ENCODE measurements at regions of chr20 and their contacts with region 1.

Region 1: DNA sequence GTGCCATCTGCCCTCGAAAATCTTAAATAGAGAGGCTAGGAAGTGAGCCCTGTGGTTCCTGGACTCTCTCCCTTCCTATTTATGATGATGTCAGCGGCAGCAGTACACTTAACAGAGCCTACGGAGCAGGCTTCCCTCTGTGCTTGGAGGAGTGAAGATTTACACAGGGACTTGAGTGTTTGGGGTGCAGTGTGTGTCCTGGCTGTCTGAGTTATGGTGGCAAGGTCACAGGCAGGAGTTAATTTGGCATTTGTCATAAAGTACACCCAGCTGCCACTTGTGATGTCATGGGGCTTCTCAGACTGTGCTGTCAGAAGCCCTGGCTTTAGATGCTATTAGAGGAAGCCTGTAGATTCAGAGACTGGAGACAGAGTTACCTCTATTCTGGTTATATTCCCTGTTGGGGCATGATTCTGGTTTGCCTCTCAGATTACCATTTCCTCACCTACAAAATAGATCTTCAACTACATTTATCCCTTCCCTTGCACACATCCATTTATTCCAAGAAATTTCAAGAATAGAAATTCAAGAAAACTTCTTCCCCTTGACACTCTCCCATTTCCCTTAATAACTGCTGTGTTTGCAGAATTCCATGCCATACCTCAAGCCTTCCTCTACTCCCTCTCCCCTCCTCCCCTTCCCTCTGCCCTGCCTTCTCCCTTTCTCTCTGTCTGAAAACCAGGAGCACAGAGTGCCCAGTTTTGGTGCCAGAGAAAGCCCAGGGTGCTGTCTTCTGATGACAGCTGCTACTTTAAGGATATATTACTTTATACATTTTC is 72.1 kb downstream of the SLC24A3 start:
- DNase-seq: peak; percentile 75
- H3K4me3 ChIP-seq: no peak overlapping the region
- H3K27ac ChIP-seq: peak overlapping the region in 3 of 4 donors; percentile 69 to 74 (median 70)
- H3K4me1 ChIP-seq: peaks cover 0 to 51% (median 48%) of the 10 kb centered on the region in 4 donors
- H3K27me3 ChIP-seq: no peaks in the 10 kb centered on the region
- CTCF ChIP-seq: no peak
- EP300 ChIP-seq: peak in 1 of 4 donors; percentile 25
- POLR2A ChIP-seq: no peak

Region 2: GRCh38 chr20:19212821-19213502 is 71.6 kb before region 1 on chr20:
- intact Hi-C with region 1: loop called (anchors 2 kb)
- DNase-seq: peak; percentile 93
- H3K4me3 ChIP-seq: peak overlapping the region; percentile 47 to 74 (median 60)
- H3K27ac ChIP-seq: peak overlapping the region; percentile 49 to 84 (median 80)
- H3K4me1 ChIP-seq: peaks cover 0 to 41% (median 31%) of the 10 kb centered on the region in 4 donors
- H3K27me3 ChIP-seq: peaks cover 0 to 6% (median 0%) of the 10 kb centered on the region in 3 donors
- CTCF ChIP-seq: peak; percentile 42 to 69 (median 52)
- EP300 ChIP-seq: no peak
- POLR2A ChIP-seq: no peak

Region 3: GRCh38 chr20:19232997-19233794 is 51.4 kb before region 1 on chr20:
- intact Hi-C with region 1: loop called (anchors 5 kb)
- DNase-seq: peak; percentile 79
- H3K4me3 ChIP-seq: peak overlapping the region in 3 of 4 donors; percentile 7 to 27 (median 14)
- H3K27ac ChIP-seq: peak overlapping the region in 3 of 4 donors; percentile 54 to 82 (median 79)
- H3K4me1 ChIP-seq: peaks cover 0 to 46% (median 39%) of the 10 kb centered on the region in 4 donors
- H3K27me3 ChIP-seq: no peaks in the 10 kb centered on the region
- CTCF ChIP-seq: no peak
- EP300 ChIP-seq: peak in 3 of 4 donors; percentile 58 to 84 (median 79)
- POLR2A ChIP-seq: no peak

Region 4: GRCh38 chr20:19341348-19342053 is 56.9 kb after region 1 on chr20:
- intact Hi-C with region 1: loop called (anchors 5 kb)
- DNase-seq: no peak
- H3K4me3 ChIP-seq: no peak overlapping the region
- H3K27ac ChIP-seq: peak overlapping the region in 3 of 4 donors; percentile 39 to 52 (median 49)
- H3K4me1 ChIP-seq: peaks cover 0 to 48% (median 40%) of the 10 kb centered on the region in 4 donors
- H3K27me3 ChIP-seq: no peaks in the 10 kb centered on the region
- CTCF ChIP-seq: no peak
- EP300 ChIP-seq: peak in 3 of 4 donors; percentile 13 to 62 (median 40)
- POLR2A ChIP-seq: no peak

Region 5: DNA sequence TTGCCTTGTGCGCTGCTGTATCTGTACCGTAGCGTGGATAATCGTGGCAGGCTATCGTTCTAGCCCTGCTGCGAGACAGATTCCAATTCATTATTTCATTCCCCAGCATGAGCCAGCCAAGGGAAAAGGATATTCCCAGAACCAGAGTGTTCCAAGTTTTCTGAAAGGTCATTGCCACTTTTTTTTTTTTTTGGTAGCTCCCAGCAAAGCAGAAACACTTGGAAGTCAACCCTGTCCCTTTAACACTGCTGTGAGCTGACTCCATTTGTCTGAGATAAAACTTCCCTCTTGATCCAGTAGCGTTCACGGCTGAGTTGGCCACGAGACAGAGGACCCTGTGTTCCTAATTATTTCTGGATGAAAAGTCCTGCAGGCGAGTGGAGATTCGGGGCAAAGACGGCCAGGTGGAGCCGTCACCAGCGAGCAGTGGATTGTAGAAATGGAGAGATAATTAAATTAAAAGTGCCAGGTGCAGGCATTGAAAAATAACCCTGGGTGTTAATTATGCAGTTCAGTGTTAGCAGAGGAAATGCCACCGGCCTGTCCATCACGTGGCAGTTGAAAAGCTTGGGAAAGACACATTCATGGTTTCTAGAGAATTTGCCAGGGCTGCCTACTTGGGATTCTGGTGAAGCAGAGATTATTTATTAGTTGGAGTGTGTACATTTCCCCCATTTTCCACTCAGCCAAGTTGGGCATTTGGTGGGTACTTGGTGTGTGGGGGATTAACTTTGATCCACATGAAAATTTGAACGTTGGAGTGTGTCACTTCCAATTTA is 92.1 kb after region 1 on chr20:
- intact Hi-C with region 1: loop called (anchors 5 kb)
- DNase-seq: no peak
- H3K4me3 ChIP-seq: no peak overlapping the region
- H3K27ac ChIP-seq: peak overlapping the region in 1 of 4 donors; percentile 31
- H3K4me1 ChIP-seq: peaks cover 0 to 50% (median 28%) of the 10 kb centered on the region in 4 donors
- H3K27me3 ChIP-seq: no peaks in the 10 kb centered on the region
- CTCF ChIP-seq: no peak
- EP300 ChIP-seq: no peak
- POLR2A ChIP-seq: no peak

Region 6: GRCh38 chr20:19456596-19457395 is 172.2 kb after region 1 on chr20:
- intact Hi-C with region 1: loop called (anchors 5 kb)
- DNase-seq: no peak
- H3K4me3 ChIP-seq: no peak overlapping the region
- H3K27ac ChIP-seq: peak overlapping the region in 2 of 4 donors; percentile 8 to 27
- H3K4me1 ChIP-seq: peaks cover 0 to 41% (median 38%) of the 10 kb centered on the region in 4 donors
- H3K27me3 ChIP-seq: no peaks in the 10 kb centered on the region
- CTCF ChIP-seq: no peak
- EP300 ChIP-seq: no peak
- POLR2A ChIP-seq: no peak

Region 7: GRCh38 chr20:19889011-19889953 is 604.7 kb after region 1 on chr20:
- intact Hi-C with region 1: no loop called
- DNase-seq: peak; percentile 77
- H3K4me3 ChIP-seq: peak overlapping the region in 3 of 4 donors; percentile 33 to 43 (median 35)
- H3K27ac ChIP-seq: peak overlapping the region; percentile 80 to 87 (median 85)
- H3K4me1 ChIP-seq: peaks cover 0 to 64% (median 53%) of the 10 kb centered on the region in 4 donors
- H3K27me3 ChIP-seq: no peaks in the 10 kb centered on the region
- CTCF ChIP-seq: no peak
- EP300 ChIP-seq: no peak
- POLR2A ChIP-seq: no peak